ENCODE measurements at regions of chr12 and their contacts with region 1.

Region 1: GRCh38 chr12:107369679-107370078 is 276.3 kb upstream of the CRY1 start:
- DNase-seq: no peak
- H3K4me3 ChIP-seq: no peak overlapping the region
- H3K27ac ChIP-seq: no peak overlapping the region
- H3K27me3 ChIP-seq: no peaks in the 10 kb centered on the region
- CTCF ChIP-seq: no peak

Region 2: DNA sequence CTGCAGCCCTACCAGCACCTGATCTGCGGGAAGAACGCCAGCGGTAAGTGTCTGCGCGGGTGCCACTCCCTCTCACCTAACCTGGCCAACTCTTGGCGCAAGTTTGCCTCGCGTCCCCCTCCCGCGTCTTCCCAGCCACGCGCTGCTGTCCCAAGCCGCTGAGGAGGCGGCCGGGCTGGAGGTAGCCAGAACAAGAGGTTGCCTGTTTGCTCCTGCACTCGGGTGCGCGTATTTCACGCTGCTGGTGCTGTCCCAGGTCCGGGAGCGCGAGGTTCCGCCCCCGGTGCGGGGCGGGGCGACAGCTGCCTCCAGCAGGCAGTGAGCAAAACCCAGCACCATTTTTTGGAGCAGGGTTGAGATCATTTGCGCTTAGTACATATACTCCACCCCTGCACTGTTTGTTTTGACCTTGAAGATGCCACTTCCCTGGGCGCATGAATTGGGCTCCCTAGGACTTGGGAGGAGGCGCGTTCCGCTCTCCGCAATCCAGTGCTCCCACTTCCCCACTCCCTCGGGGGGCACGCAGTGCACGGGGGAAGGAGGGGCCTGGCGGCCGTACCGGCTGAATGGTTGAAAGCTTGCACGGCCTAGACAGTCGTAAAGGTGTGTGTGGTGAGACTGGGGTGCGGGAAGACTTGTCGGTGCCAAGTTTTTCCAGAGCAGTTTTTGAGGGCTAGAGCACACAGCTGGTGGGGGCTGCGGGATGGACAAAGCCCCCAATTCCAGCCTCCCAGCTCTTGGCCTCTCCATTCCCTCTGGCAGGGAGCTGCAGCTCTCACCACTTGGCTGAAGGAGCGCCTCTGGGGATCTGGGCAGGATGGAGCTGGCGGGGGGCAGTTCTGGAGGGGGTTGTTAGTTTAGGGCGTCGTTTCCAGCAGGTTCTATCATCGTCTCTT is 49.4 kb before region 1 on chr12:
- CTCF ChIA-PET with region 1: no interaction called
- POLR2A ChIA-PET with region 1: interaction called, 10 read pairs
- DNase-seq: no peak
- H3K4me3 ChIP-seq: peak overlapping the region; percentile 67
- H3K27ac ChIP-seq: no peak overlapping the region
- H3K27me3 ChIP-seq: peaks cover 13% of the 10 kb centered on the region
- CTCF ChIP-seq: no peak

Region 3: DNA sequence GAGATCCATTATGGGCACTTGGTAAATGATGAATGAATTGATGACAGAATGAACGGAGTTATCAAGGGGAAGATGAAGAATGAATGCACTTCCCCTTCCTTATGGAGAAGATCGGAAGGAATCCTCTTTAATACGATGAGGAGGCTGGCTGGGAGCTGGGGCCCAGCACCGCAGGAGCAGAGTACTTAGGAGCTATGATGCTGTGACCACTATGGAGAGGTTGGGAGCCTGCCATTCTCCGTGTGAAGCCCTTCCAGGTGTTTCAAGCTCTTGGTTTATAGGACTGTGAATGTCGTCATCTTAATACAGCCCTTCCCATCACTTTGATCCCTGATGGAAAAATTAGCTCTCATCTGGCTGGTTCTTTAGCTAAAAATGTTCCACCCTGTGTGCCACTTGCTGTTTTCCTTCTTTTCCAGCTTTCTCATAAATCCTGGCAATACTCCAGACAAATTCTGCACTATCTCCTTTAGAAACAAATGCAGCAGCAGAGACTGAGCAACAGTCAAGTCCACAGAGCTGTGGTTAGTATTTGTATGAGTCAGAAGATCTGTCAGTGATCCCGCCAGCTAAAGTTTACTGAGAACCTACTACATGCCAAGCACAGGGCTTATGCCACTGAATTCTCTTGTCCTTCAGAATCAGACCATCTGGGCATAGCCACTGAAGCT is 13.3 kb before region 1 on chr12:
- CTCF ChIA-PET with region 1: interaction called, 12 read pairs
- POLR2A ChIA-PET with region 1: no interaction called
- DNase-seq: peak; percentile 76
- H3K4me3 ChIP-seq: no peak overlapping the region
- H3K27ac ChIP-seq: no peak overlapping the region
- H3K27me3 ChIP-seq: no peaks in the 10 kb centered on the region
- CTCF ChIP-seq: no peak

Region 4: DNA sequence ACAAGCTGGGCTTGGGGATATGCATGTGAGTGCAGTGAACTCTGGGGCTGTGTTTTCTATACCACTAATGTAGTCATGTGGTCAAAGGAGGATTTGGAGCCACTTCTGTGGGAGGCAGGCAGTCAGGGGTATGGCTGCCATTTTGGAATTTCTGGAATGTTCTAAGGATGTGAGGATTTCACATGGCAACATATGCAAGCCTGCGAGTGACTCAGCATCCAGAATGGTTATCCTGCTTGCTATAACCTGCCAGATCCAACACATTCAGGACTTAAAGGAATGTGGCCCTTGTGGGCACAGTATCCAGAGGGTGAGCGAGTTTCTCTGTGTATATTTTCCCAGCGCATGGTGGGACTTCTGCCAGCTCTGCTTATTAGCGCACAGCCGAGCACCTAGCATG is 66.7 kb after region 1 on chr12:
- CTCF ChIA-PET with region 1: no interaction called
- POLR2A ChIA-PET with region 1: no interaction called
- DNase-seq: peak; percentile 69
- H3K4me3 ChIP-seq: no peak overlapping the region
- H3K27ac ChIP-seq: no peak overlapping the region
- H3K27me3 ChIP-seq: no peaks in the 10 kb centered on the region
- CTCF ChIP-seq: no peak

Measured in AG04450 (cell line).